ENCODE measurements at regions of chr6 and their contacts with region 1.

Region 1: DNA sequence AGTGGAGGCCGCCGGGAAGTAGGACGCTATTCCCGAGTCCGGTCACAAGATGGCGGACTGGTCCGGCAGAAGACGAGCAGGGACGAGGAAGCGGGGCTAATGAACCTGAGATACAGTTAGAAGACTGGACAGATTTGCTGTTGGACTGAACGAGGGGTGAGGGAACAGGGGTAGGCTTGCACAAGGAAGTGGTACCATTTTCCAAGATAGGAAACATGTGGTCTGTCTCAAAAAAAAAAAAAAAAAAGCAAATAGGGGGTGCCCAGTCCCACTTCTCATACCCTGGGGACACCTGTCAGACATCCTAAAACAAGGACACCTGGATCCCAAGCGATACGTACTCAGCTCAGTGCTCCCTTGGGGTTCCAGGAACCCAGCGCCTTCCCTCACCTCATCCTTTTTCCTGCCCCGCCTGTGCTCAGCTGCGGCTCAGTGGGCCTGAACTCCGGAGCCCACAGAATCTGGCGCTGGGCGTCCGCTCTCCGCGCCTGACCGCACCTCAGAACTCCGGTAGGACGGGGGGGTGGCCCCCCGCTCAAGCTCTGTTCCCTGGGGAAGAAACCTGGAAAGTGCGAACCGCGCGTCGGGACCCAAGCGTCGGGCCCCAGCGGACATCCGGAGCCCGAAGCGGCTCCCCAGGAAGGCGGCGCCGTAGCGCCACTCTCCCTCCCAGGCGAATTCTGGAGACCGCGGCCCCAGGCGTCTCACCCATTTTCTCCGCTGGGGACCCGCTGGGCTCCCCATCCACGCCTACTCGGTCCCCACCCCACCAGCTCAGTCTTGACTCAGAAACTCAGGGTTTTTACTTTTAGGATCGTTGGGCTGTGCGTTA is at the start of gene LY6G5C:
- DNase-seq: peak; percentile 82 to 88
- H3K4me3 ChIP-seq: peak within 1 kb of the TSS; percentile 70
- H3K27ac ChIP-seq: peak within 1 kb of the TSS; percentile 31; the same call in 1 of the 2 replicates
- H3K4me1 ChIP-seq: peaks cover 17% of the 10 kb centered on the region
- H3K27me3 ChIP-seq: no peaks in the 10 kb centered on the region
- CTCF ChIP-seq: peak; percentile 54; the same call in 1 of the 2 replicates
- total RNA-seq, gene LY6G5C: 2.6 and 3.7 TPM in 2 replicates

Region 2: DNA sequence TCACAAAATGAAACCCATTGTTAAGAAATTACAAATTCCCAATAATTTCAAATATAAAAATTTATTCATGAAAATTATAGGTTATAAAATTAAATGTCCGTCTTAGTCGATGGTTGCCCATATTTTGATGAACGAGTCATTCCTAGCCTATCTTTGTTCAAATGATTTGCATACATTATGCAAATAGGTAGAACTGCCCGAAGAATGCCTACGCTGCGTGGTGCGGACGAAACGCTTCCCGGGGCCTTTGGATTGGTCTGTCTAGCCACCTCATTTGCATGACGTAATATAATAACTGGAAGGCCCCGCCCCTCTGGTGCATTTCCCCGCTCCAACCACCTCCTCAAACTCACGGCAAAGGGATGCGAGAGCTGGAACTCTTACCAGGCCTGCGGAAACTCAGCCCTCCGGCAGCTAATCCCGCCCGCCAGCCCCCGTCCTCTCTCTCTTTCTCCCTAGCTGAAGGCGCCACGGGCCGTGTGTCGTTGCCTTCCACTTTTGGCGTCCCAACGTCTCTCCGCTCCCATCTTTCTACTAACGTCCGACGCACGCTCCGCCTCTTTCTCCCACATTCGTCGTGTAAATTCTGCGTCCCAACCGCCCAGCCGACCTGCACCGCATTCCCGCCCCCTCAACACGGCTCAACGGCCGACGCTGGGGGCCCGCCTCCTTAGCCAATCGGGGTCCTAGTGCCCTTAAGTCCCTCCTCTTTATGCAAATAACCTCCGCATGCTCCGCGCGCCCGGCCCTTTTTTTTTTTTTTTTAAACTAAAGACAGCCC is 61.1 kb before region 1 on chr6:
- CTCF ChIA-PET with region 1: no interaction called
- POLR2A ChIA-PET with region 1: no interaction called
- intact Hi-C with region 1: no loop called
- DNase-seq: peak; percentile 96 to 97
- H3K4me3 ChIP-seq: peak overlapping the region; percentile 67
- H3K27ac ChIP-seq: peak overlapping the region; percentile 81
- H3K4me1 ChIP-seq: peaks cover 23% of the 10 kb centered on the region
- H3K27me3 ChIP-seq: no peaks in the 10 kb centered on the region
- CTCF ChIP-seq: no peak

Region 3: DNA sequence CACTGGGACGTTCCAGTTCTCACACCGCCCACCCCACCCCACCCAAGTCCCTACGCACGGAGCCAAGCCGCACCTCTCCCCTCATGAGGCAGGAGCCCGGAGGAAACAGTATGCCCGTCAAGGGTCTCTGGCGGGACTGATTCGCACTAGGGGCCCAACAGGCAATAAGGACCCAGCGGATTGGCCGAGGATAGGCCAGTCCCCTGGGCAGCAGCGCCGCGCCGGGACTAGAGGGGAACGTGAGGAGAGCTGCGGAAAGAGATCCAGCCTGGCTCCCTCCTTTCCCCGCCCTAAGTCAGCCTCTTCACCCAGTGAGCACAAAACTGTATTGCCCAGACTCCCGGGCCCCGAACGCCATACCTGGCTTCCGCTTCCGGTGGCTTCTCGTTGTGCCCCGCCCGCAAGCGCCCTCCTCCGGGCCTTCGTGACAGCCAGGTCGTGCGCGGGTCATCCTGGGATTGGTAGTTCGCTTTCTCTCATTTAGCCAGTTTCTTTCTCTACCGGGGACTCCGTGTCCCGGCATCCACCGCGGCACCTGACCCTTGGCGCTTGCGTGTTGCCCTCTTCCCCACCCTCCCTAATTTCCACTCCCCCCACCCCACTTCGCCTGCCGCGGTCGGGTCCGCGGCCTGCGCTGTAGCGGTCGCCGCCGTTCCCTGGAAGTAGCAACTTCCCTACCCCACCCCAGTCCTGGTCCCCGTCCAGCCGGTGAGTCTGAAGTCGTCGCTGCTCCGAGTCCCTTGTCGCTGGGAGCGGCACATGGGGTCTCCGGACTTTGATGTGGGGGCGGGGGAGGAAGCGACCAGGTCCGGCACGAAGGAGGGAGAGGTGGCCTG is 15.3 kb before region 1 on chr6 and contains the start of gene CSNK2B:
- CTCF ChIA-PET with region 1: no interaction called
- POLR2A ChIA-PET with region 1: no interaction called
- intact Hi-C with region 1: no loop called
- DNase-seq: peak; percentile 95 to 96
- H3K4me3 ChIP-seq: peak within 1 kb of the TSS; percentile 90
- H3K27ac ChIP-seq: peak within 1 kb of the TSS; percentile 80
- H3K4me1 ChIP-seq: peaks cover 24% of the 10 kb centered on the region
- H3K27me3 ChIP-seq: no peaks in the 10 kb centered on the region
- CTCF ChIP-seq: no peak
- total RNA-seq, gene CSNK2B: 152 and 173 TPM in 2 replicates

Region 4: DNA sequence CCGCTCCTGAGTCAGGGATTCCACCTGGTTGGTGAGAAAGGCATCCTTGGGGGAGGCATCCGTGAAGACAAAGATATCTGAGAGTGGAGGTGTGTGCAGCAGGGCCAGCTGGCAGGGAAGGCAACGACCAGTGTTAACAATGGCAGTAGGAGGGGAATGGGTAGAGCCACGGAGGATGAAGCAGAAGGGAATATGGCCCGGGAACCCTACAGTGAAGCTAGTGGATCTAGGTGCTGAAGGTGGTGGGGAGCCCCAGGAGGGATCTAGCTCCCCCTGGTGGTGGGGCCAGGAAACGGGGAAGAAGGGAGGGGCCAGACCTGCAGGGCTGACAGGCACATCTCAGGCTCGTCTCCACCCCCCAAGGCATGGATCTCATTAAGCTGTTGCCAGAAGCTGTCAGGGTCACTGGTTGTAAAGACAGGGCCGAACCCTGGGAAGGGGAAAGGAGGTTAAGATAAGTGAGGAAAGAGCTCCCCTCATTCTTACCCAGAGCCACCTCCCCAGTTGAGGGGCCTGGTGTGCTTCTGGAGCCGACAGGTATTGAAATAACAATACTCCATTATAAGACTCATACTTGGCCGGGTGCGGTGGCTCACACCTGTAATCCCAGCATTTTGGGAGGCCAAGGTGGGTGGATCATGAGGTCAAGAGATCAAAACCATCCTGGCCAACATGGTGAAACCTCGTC is 88.8 kb after region 1 on chr6:
- CTCF ChIA-PET with region 1: interaction called, 11 read pairs
- POLR2A ChIA-PET with region 1: interaction called, 3 read pairs
- intact Hi-C with region 1: loop called (anchors 1 kb)
- DNase-seq: peak; percentile 55 to 83
- H3K4me3 ChIP-seq: no peak overlapping the region
- H3K27ac ChIP-seq: no peak overlapping the region
- H3K4me1 ChIP-seq: peaks cover 5% of the 10 kb centered on the region
- H3K27me3 ChIP-seq: no peaks in the 10 kb centered on the region
- CTCF ChIP-seq: peak; percentile 93

Region 5: GRCh38 chr6:31834434-31835198 is 153.6 kb after region 1 on chr6:
- CTCF ChIA-PET with region 1: no interaction called
- POLR2A ChIA-PET with region 1: no interaction called
- intact Hi-C with region 1: loop called (anchors 1 kb)
- DNase-seq: peak; percentile 71 to 80
- H3K4me3 ChIP-seq: peak overlapping the region; percentile 94
- H3K27ac ChIP-seq: peak overlapping the region; percentile 77
- H3K4me1 ChIP-seq: peaks cover 38% of the 10 kb centered on the region
- H3K27me3 ChIP-seq: no peaks in the 10 kb centered on the region
- CTCF ChIP-seq: no peak

Region 6: DNA sequence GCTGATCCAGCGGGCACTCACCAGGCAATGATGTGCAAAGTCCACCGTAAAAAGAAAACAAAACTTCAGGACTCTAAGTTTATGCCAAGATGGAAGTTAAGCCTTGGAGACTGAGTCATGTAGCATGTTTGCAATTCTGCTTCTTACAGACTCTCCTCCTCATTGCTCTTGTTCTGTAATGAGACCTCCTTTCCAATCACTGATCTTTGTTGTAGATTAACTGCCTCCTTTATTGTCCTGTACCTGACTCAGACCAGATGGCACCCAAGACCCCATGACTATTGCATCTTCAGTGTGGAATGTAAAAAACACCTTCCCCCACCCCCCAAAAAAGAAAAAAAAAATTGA is 170.4 kb after region 1 on chr6:
- CTCF ChIA-PET with region 1: no interaction called
- POLR2A ChIA-PET with region 1: interaction called, 11 read pairs
- intact Hi-C with region 1: no loop called
- DNase-seq: no peak
- H3K4me3 ChIP-seq: no peak overlapping the region
- H3K27ac ChIP-seq: no peak overlapping the region
- H3K4me1 ChIP-seq: no peaks in the 10 kb centered on the region
- H3K27me3 ChIP-seq: no peaks in the 10 kb centered on the region
- CTCF ChIP-seq: no peak

Region 7: DNA sequence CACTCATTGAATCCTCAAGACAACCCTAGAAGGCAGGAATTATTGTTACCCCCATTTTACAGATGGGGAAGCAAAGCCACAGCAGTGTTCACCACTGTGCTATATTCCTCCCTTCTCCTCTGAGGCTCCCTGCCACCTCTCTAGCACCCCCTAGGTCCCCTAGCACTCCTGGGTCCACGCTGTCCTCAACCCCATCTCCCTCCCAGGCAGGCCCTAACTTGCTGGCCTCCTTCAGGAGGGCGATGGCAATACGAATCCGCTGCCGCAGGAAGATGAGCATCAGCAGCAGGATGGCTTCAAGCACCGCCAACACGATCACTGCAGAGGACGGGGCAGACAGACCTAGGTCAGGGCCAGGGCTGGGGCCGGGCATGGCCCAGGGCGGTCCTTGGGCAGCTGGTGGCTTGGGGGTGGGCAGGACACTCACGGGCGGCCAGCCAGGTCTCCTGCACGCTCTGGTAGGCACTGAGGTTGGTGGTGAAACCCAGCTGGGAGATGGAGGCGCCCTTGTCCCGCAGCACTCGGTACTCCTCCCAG is 189.4 kb after region 1 on chr6:
- CTCF ChIA-PET with region 1: no interaction called
- POLR2A ChIA-PET with region 1: no interaction called
- intact Hi-C with region 1: loop called (anchors 10 kb)
- DNase-seq: no peak
- H3K4me3 ChIP-seq: no peak overlapping the region
- H3K27ac ChIP-seq: no peak overlapping the region
- H3K4me1 ChIP-seq: peaks cover 24% of the 10 kb centered on the region
- H3K27me3 ChIP-seq: no peaks in the 10 kb centered on the region
- CTCF ChIP-seq: no peak

Region 8: DNA sequence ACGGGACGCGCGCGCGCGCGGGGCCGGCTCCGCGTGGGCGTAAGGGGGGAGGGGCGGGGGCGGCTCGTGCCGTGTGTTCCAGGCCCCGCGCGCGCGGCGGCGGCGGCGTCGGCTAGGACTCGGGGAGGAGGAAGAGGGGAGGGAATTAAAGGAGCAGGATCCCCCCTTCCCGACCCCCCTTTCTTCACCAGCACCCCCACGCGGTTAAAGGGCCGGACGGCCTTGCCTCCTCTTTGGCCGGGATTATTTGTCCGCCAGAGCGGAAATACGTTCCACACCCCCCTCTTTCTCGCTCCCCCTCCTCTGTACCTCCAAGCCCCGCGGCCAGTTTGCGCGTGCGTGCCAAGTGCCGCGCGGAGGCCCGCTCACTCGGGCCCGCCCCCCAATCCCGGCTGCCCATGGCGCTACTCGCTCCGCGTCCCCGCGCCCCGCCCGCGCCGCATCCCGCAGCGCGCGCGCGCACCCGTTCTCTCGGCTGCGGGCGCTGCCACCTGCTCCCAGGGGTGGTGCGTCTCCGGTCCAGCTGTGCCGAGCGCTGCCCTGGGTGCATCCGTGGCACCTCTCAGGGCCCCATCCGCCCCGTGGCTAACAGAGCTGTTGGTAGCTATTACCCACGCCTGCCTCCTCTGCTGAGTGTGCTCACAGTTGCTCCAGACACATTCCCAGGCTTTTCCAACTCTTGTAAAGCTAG is 221.0 kb after region 1 on chr6 and contains the start of gene ZBTB12:
- CTCF ChIA-PET with region 1: no interaction called
- POLR2A ChIA-PET with region 1: no interaction called
- intact Hi-C with region 1: loop called (anchors 5 kb)
- DNase-seq: peak; percentile 76 to 95
- H3K4me3 ChIP-seq: peak within 1 kb of the TSS; percentile 65
- H3K27ac ChIP-seq: peak within 1 kb of the TSS; percentile 18; the same call in 1 of the 2 replicates
- H3K4me1 ChIP-seq: peaks cover 23% of the 10 kb centered on the region
- H3K27me3 ChIP-seq: no peaks in the 10 kb centered on the region
- CTCF ChIP-seq: no peak
- total RNA-seq, gene ZBTB12: 16.2 and 20.3 TPM in 2 replicates

Region 9: DNA sequence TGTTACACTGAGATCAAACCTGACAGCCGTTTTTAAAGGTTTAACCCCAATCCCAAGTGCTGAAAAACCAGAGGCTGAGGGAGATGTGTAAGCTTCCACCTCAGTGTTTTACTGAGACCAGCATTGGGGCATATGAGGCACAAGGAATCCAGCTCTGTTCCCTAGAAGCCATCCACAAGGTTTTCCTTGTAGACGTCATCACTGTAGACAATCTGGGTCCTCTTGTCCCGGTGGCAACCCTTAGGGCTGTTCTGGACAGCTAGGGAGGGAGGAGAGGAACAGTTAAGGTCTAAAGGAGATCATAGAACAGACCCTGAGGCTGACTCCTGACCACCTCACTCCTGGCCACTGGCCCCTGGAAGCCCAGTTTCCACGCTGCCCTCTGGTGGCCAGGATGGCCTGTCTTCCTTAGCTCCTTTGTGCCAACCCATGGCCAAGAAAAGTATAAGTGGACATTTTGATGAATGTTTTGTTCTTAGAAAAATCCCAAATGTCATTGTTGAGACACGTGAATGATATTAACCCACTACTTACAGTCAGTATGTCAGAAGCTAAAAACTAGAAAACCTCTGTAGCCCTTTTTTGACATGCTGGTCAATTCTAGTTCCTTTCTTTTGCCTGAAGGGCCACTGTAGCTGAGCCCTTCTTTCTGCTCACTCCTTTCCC is 271.2 kb after region 1 on chr6:
- CTCF ChIA-PET with region 1: interaction called, 14 read pairs
- POLR2A ChIA-PET with region 1: no interaction called
- intact Hi-C with region 1: loop called (anchors 2 kb)
- DNase-seq: peak; percentile 36 to 67
- H3K4me3 ChIP-seq: no peak overlapping the region
- H3K27ac ChIP-seq: no peak overlapping the region; the same call in 1 of the 2 replicates
- H3K4me1 ChIP-seq: peaks cover 24% of the 10 kb centered on the region
- H3K27me3 ChIP-seq: no peaks in the 10 kb centered on the region
- CTCF ChIP-seq: peak; percentile 84

Measured in PC-9 (cell line).